Mammary epithelial cell (primary cell): ENCODE measurements at regions of chr12 and their contacts with region 1.

Region 1: DNA sequence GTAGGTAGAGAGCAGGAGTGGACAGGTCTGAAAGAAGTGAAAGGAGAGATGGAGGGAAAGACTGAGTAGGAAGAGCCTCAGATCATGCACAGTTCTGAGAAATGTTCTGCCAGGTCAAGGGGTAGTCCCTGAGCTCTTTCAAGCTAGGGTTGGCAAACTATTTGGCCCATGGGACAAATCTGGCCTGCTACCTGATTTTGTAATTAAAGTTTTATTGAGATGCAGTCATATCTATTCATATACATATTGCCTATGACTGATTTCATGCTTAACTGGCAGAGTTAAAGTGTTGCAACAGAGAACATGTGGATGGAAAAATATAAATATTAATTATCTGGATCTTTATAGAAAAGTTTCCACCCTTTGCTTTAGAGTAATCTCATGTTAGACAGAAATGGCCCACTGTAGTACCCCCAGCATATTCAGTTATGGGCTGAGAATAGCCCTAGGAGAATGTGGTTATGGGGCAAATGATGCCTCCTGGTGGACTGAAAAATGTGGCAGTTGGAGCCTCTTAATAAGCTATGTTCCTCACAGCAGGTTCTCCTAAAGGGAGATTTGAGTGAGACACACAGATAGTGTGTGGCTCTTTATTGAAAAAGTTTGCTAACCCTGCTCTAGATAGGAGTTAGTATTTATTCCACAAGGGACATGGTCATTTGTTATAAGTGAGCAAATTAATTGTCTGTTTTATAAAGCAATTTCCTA is 476.9 kb downstream of the LRIG3 start:
- DNase-seq: peak; percentile 35
- H3K4me3 ChIP-seq: no peak overlapping the region
- H3K27ac ChIP-seq: no peak overlapping the region
- H3K4me1 ChIP-seq: no peaks in the 10 kb centered on the region
- H3K27me3 ChIP-seq: no peaks in the 10 kb centered on the region
- CTCF ChIP-seq: peak; percentile 63 to 72

Region 2: GRCh38 chr12:58346032-58346632 is 97.3 kb before region 1 on chr12:
- CTCF ChIA-PET with region 1: no interaction called
- dilution Hi-C with region 1: no loop called
- in situ Hi-C with region 1: loop called in 1 of 2 experiments (anchors 10 kb)
- intact Hi-C with region 1: loop called (anchors 1 kb)
- DNase-seq: peak; percentile 26
- H3K4me3 ChIP-seq: no peak overlapping the region
- H3K27ac ChIP-seq: no peak overlapping the region
- H3K4me1 ChIP-seq: no peaks in the 10 kb centered on the region
- H3K27me3 ChIP-seq: no peaks in the 10 kb centered on the region
- CTCF ChIP-seq: peak; percentile 73 to 77

Region 3: GRCh38 chr12:58416236-58416635 is 27.2 kb before region 1 on chr12:
- CTCF ChIA-PET with region 1: no interaction called
- dilution Hi-C with region 1: no loop called
- in situ Hi-C with region 1: no loop called
- intact Hi-C with region 1: loop called (anchors 1 kb)
- DNase-seq: peak; percentile 57
- H3K4me3 ChIP-seq: no peak overlapping the region
- H3K27ac ChIP-seq: no peak overlapping the region
- H3K4me1 ChIP-seq: peaks cover 39% of the 10 kb centered on the region
- H3K27me3 ChIP-seq: no peaks in the 10 kb centered on the region
- CTCF ChIP-seq: peak in 1 of 2 donors; percentile 24

Region 4: DNA sequence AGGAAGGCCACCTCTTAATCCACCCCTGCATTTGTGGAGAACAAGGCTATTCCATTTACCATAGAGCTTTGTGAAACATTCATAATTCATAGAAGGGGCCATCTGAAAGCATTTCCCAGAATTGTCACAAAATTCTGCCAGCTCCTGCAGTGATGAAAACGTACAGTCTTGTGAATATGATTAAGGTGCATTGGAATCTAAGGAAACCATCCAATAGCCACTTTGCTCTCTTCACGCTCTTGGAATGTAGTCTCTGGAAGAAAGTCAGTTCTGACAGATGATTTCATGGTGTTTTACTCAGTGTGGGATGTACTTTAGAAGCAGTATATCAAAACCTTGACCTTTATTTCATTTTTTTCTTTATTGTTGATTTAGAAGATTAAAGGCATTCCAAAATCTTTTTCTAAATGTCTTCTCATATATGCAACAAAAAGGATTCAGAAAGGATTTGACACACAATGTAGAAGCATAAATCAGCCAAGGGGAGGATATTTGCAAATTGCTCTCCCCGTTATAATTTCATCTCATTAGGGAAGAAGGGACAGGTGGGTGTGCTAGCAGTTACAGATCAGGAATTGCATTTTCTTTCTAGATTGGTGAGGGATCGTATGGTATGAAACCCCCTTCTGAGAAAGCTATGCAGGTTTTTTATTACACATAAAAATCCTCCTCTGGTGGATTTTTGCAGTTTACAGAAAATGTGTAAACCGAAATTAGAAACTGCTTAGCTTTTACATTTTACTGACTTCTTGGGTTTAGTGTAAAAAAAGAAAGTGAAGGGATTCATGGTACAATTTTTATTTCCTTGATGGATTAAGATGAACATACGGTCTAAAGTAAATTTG is 86.7 kb after region 1 on chr12:
- CTCF ChIA-PET with region 1: no interaction called
- dilution Hi-C with region 1: no loop called
- in situ Hi-C with region 1: no loop called
- intact Hi-C with region 1: loop called (anchors 5 kb)
- DNase-seq: peak; percentile 84
- H3K4me3 ChIP-seq: no peak overlapping the region
- H3K27ac ChIP-seq: peak overlapping the region; percentile 57
- H3K4me1 ChIP-seq: peaks cover 41% of the 10 kb centered on the region
- H3K27me3 ChIP-seq: no peaks in the 10 kb centered on the region
- CTCF ChIP-seq: no peak